ENCODE measurements at regions of chr11 and their contacts with region 1.

Region 1: DNA sequence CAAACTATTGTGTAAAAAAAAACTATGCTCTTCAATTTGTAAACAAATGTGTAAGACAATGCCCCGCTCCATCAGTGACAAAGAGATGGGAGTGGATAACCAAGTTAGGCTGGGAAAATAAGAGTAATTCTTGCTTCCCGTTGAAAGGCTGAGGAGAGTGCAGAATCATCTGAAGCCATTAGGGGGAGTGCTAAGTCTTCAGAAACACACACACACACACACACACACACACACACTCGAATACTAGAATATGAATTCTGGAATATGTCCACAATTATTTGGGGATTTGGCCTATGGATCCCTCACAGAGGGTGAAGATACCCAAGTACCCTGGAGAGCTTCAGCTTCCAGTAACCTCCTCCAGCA is 27.8 kb upstream of the ROBO3 start:
- DNase-seq: no peak
- H3K4me3 Mint-ChIP-seq: no peak overlapping the region
- H3K27ac Mint-ChIP-seq: no peak overlapping the region
- H3K4me1 Mint-ChIP-seq: peaks cover 17% of the 10 kb centered on the region
- H3K27me3 Mint-ChIP-seq: peaks cover 59% of the 10 kb centered on the region

Region 2: GRCh38 chr11:124415356-124415923 is 422.0 kb before region 1 on chr11:
- intact Hi-C with region 1: loop called (anchors 1 kb)
- DNase-seq: no peak
- H3K4me3 Mint-ChIP-seq: no peak overlapping the region
- H3K27ac Mint-ChIP-seq: no peak overlapping the region
- H3K4me1 Mint-ChIP-seq: no peaks in the 10 kb centered on the region
- H3K27me3 Mint-ChIP-seq: peaks cover 7% of the 10 kb centered on the region

Region 3: DNA sequence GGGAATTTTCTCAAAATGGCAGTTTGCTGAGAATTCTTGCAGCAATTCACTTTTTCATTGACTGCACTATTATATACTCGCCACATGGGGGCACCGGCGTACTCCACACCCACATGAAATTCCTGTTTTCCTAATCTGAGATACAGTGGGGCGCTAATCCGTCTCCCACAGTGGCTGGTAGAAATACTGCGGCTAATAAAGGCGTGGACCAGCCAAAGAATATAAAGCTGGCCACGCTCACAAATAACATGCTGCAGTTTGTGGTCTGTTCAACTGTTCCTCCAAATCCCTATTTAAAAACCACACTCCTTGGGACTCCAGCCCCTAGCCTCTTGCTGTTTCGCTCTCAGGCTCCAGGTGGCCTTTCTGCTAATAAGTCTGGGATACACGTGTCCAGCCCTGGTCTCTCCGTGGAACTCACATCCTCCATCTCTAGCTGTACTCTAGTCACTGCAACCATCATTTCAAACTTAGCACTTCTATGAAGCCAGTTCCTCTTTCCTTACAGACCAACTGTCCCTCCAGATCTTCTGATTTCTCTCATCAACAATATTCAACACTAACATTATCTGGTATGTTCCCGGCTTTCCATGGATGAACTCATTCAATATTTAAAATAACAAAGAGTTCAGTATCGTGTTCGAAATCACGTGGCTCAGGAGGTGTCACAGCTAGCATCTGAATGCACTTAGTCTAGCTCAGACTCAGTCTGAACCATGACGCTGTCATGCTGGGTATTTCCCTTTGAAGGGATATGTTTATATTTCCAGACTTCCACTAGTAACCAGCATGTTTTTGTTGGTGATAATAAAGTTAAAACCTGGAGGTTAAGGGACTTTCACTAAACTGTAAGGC is 192.8 kb before region 1 on chr11:
- intact Hi-C with region 1: loop called (anchors 1 kb)
- DNase-seq: no peak
- H3K4me3 Mint-ChIP-seq: no peak overlapping the region
- H3K27ac Mint-ChIP-seq: no peak overlapping the region
- H3K4me1 Mint-ChIP-seq: peaks cover 8% of the 10 kb centered on the region
- H3K27me3 Mint-ChIP-seq: no peaks in the 10 kb centered on the region

Region 4: DNA sequence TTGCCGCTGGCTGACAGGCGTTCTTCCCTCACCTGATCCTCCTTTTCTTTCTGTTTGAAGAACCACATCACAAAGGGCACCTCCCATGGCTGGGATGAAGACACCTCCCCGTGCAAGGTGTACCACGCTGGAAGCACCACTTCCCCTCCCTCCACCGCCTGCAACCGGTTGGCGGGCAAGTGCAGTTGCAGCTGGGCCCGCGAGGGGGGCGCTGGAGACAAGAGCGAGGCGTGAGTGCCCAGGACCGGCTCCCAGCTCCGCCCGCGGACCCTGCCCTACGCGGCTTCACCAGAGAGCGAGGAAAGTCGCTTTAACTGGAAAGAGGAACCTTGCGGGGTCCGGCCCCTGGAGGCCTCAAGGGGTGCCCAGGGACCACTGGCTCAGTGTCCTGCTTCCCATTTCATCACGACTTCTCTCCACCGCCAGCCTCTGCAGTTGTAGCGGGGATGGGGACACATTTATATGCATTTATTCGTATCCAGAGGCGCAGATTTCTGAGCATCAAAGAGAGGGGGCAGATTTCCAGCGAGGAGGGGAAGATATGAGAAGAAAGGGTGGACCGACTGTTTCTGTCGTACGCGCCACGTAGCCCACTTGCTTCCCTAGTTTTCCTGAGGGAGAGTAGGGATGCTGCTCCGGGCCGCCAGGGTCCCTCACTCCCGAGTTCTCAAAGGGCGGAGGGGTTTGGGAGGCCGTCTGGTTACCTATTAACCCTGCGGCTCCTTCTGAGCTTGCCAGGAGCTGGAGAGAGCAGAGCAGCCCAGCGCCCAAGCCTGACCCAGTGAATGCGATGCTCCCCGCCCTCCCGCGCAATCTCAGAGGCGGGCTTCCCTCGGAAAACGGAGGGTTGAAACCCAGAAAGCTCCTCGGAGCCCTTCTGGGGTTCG is 78.9 kb before region 1 on chr11:
- intact Hi-C with region 1: loop called (anchors 1 kb)
- DNase-seq: peak; percentile 59
- H3K4me3 Mint-ChIP-seq: peak overlapping the region; percentile 61
- H3K27ac Mint-ChIP-seq: no peak overlapping the region
- H3K4me1 Mint-ChIP-seq: peaks cover 19% of the 10 kb centered on the region
- H3K27me3 Mint-ChIP-seq: peaks cover 57% of the 10 kb centered on the region

Region 5: GRCh38 chr11:124865921-124866583 is 28.6 kb after region 1 on chr11:
- intact Hi-C with region 1: loop called (anchors 1 kb)
- DNase-seq: peak; percentile 28
- H3K4me3 Mint-ChIP-seq: no peak overlapping the region
- H3K27ac Mint-ChIP-seq: no peak overlapping the region
- H3K4me1 Mint-ChIP-seq: peaks cover 16% of the 10 kb centered on the region
- H3K27me3 Mint-ChIP-seq: peaks cover 88% of the 10 kb centered on the region

Region 6: DNA sequence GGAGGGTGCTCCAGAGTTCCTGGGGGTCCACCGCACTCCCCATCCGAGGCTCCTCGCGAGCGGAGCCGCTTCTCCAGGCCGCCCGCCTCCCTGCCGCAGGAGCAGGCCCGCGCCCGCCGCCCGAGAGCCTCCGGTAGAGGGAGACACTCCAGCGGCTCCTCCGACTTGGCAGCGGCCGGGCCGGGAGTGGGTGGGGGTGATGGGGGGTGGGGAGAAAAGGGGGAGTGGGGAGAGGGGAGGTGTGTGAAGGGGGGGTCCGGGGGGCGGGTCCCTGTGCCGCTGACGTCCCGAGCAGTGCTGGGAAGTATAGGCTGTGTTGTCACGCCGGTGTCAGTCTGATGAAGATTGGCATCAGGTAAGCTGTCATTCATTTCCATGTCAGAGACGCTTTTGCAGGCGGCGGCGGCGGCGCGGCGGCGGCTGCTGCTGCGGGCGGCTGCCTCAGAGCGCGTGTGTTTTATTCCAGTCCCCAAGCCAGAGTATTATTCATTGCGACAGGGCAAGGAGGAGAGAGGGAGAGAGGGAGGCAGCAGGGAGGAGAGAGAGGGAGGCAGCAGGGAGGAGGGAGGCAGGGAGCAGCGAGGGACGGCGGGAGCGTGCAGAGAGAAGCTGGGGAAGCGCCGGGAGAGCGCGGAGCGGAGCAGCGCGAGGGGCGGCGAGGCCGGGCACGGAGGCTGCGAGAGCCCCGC is 327.1 kb after region 1 on chr11 and contains the start of gene PKNOX2:
- intact Hi-C with region 1: loop called (anchors 5 kb)
- DNase-seq: peak; percentile 39
- H3K4me3 Mint-ChIP-seq: peak within 1 kb of the TSS; percentile 91
- H3K27ac Mint-ChIP-seq: no peak within 1 kb of the TSS
- H3K4me1 Mint-ChIP-seq: peaks cover 16% of the 10 kb centered on the region
- H3K27me3 Mint-ChIP-seq: peaks cover 65% of the 10 kb centered on the region
- total RNA-seq, gene PKNOX2: not detected in 2 replicates

Measured in activated T-helper 1 cell treated with anti-CD3 and anti-CD28 coated beads, Interleukin-12 subunit alpha, Interleukin-12 subunit beta, Interleukin-2, Interleukin-4 antibody, amounts not matched to agents 30 ng/mL and 10 ng/mL and 1 ng/mL, durations not matched to agents 14 hours and 24 hours and 36 hours (primary cell).